GM23248 (cell line): ENCODE measurements at regions of chr11 and their contacts with region 1.

Region 1: GRCh38 chr11:114262681-114263512 is 33.3 kb upstream of the NNMT start:
- DNase-seq: peak; percentile 80
- H3K4me3 ChIP-seq: no peak overlapping the region
- H3K27ac ChIP-seq: no peak overlapping the region
- H3K4me1 ChIP-seq: no peaks in the 10 kb centered on the region
- H3K27me3 ChIP-seq: peaks cover 25% of the 10 kb centered on the region

Region 2: GRCh38 chr11:113818426-113818825 is 444.5 kb before region 1 on chr11:
- in situ Hi-C with region 1: no loop called
- DNase-seq: no peak
- H3K4me3 ChIP-seq: no peak overlapping the region
- H3K27ac ChIP-seq: no peak overlapping the region
- H3K4me1 ChIP-seq: no peaks in the 10 kb centered on the region
- H3K27me3 ChIP-seq: no peaks in the 10 kb centered on the region

Region 3: DNA sequence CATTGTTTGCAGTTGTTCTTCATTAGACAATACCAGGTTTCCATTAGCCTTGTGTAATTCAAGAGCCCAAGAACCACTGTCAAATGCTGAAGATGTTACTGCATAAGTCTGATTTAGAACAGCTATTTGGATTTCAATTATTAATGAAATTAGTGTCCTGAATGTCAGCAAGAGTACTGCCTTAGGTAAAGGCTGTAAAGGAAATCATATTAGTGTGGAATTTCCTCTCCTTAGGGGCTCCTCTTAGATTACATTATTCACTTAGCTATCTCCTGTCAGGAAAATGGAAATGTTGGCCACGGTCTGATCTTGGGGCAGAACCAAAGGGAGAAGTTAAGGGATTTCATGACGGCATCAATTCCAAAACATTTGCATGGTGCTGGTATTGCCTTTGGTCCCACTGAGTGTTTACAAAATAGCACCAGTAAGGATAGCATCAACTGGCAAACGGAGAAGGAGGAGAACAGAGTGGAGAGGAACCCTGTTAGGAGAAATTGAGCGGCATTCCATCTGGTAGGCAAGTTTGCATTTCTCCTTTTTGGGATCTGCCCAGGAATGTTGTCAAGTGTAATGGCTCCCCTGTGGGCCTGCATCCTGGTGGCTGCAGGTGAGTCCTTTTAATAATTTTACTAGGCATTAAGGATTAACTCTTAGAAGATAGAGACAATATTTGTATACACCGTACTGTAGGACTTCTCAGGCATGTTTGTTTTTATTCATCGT is 358.4 kb before region 1 on chr11 and contains the start of gene HTR3B:
- in situ Hi-C with region 1: loop called (anchors 5 kb)
- DNase-seq: no peak
- H3K4me3 ChIP-seq: no peak within 1 kb of the TSS
- H3K27ac ChIP-seq: no peak within 1 kb of the TSS
- H3K4me1 ChIP-seq: no peaks in the 10 kb centered on the region
- H3K27me3 ChIP-seq: peaks cover 58% of the 10 kb centered on the region
- total RNA-seq, gene HTR3B: not detected in 2 replicates

Region 4: DNA sequence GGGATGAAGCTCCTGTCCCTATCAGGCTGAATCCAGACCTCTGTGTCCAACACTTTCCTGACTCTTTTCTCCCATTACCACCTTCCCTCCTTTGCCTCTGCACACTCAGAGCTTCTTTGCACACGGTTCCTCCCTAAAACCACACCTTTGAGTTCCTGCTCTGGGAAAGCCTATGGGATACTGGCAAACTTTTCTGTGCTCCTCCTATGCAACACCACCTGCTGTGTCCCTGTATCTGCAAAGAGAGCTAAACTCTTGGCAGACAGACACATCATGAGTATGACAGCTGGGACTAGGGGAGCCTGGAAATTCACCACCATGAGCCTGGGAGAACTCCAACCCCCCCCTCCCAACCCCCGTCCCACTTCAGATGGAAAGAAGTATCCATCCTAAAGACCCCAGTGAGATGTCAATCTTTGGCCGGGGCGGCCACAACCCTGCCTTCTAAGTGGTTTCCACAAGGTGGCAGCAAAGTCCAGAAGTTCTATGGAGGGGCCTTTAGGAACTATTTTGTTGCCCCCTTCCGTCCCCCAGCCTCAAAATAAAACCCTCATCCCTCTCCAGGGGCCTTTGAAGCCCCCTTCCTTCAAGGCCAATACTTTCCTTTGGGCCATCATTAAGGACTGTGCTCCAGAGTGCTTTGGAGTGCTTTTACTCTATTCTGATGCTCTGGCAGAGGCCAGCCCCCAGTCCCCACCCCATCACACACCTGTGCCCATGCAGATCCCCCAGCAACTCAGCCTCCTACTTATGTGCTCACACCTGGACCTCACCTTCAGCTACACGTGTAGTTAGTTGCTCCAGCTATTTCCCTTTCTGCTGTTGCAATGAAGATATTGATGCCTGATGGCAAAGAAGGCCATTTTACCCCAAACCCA is 268.6 kb before region 1 on chr11:
- in situ Hi-C with region 1: loop called (anchors 10 kb)
- DNase-seq: peak; percentile 27
- H3K4me3 ChIP-seq: no peak overlapping the region
- H3K27ac ChIP-seq: no peak overlapping the region
- H3K4me1 ChIP-seq: no peaks in the 10 kb centered on the region
- H3K27me3 ChIP-seq: peaks cover 34% of the 10 kb centered on the region